CD4-positive, alpha-beta memory T cell (primary cell): ENCODE measurements at regions of chr2 and their contacts with region 1.

Region 1: GRCh38 chr2:85538486-85539360 is at the start of gene MAT2A:
- DNase-seq: peak; percentile 78 to 91 (median 86)
- H3K4me3 ChIP-seq: peak within 1 kb of the TSS; percentile 78 to 98
- H3K4me3 Mint-ChIP-seq: peak within 1 kb of the TSS; percentile 93 to 97 (median 95)
- H3K27ac ChIP-seq: peak within 1 kb of the TSS; percentile 83
- H3K27ac Mint-ChIP-seq: peak within 1 kb of the TSS; percentile 94 to 97 (median 95)
- H3K4me1 ChIP-seq: peaks cover 44% of the 10 kb centered on the region
- H3K4me1 Mint-ChIP-seq: peaks cover 33 to 58% (median 43%) of the 10 kb centered on the region in 4 donors
- H3K27me3 ChIP-seq: no peaks in the 10 kb centered on the region
- H3K27me3 Mint-ChIP-seq: no peaks in the 10 kb centered on the region
- total RNA-seq, gene MAT2A: 177 to 182 TPM

Region 2: DNA sequence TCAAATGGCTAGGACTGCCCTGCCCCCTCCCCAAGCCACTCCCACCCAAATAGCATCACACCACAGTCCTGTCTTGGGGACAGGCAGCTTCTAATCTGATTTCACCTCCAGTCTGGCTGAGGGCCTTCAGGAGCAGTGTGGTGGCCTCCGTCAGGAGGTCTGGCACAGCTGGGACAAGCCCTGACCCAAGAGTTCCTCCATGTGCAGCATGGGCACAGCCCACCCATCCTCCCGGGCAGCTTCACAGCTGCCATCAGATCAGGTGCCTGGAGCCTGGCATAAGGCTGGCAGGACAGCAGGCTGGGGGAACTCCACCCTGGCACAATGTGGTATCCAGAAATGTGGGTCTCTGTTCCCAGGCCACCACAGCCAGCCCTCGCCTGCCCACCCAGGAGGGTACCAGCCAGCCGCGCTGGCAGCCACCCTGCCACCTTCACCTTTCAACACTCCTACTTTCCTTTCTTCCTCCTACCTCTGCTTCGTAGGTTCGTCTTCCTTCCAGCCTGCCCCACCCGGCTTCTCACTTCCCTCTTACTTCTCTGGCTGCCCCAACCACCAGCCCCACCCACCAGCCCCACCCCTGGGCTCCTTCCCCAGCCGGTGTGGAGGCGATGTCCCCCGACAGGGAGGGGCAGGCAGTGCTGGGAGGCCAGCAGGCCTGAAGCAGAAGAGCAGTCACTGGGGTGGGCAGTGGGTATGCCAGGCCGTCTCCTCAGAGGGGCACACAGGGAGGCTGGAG is 128.7 kb before region 1 on chr2 and contains the start of gene CAPG:
- CTCF ChIA-PET with region 1: interaction called, 4 read pairs
- POLR2A ChIA-PET with region 1: interaction called, 16 read pairs
- intact Hi-C with region 1: no loop called
- DNase-seq: peak in 2 of 5 donors; percentile 25 to 34
- H3K4me3 ChIP-seq: peak within 1 kb of the TSS; percentile 47 to 58
- H3K4me3 Mint-ChIP-seq: peak within 1 kb of the TSS; percentile 86 to 90 (median 88)
- H3K27ac ChIP-seq: peak within 1 kb of the TSS; percentile 55
- H3K27ac Mint-ChIP-seq: peak within 1 kb of the TSS; percentile 54 to 92 (median 85)
- H3K4me1 ChIP-seq: peaks cover 62% of the 10 kb centered on the region
- H3K4me1 Mint-ChIP-seq: peaks cover 36 to 52% (median 44%) of the 10 kb centered on the region in 4 donors
- H3K27me3 ChIP-seq: no peaks in the 10 kb centered on the region
- H3K27me3 Mint-ChIP-seq: no peaks in the 10 kb centered on the region
- total RNA-seq, gene CAPG: 25.6 to 38.5 TPM

Region 3: GRCh38 chr2:85437488-85438284 is 101.0 kb before region 1 on chr2:
- CTCF ChIA-PET with region 1: interaction called, 4 read pairs
- POLR2A ChIA-PET with region 1: interaction called, 119 read pairs
- intact Hi-C with region 1: loop called (anchors 1 kb)
- DNase-seq: peak; percentile 77 to 88 (median 81)
- H3K4me3 ChIP-seq: peak overlapping the region; percentile 36 to 52
- H3K4me3 Mint-ChIP-seq: peak overlapping the region; percentile 87 to 95 (median 91)
- H3K27ac ChIP-seq: peak overlapping the region; percentile 75
- H3K27ac Mint-ChIP-seq: peak overlapping the region; percentile 88 to 99 (median 98)
- H3K4me1 ChIP-seq: peaks cover 30% of the 10 kb centered on the region
- H3K4me1 Mint-ChIP-seq: peaks cover 9 to 38% (median 25%) of the 10 kb centered on the region in 4 donors
- H3K27me3 ChIP-seq: no peaks in the 10 kb centered on the region
- H3K27me3 Mint-ChIP-seq: no peaks in the 10 kb centered on the region

Region 4: GRCh38 chr2:85468704-85469349 is 69.9 kb before region 1 on chr2:
- CTCF ChIA-PET with region 1: no interaction called
- POLR2A ChIA-PET with region 1: no interaction called
- intact Hi-C with region 1: no loop called
- DNase-seq: no peak
- H3K4me3 ChIP-seq: no peak overlapping the region
- H3K4me3 Mint-ChIP-seq: no peak overlapping the region
- H3K27ac ChIP-seq: no peak overlapping the region
- H3K27ac Mint-ChIP-seq: no peak overlapping the region
- H3K4me1 ChIP-seq: no peaks in the 10 kb centered on the region
- H3K4me1 Mint-ChIP-seq: no peaks in the 10 kb centered on the region
- H3K27me3 ChIP-seq: no peaks in the 10 kb centered on the region
- H3K27me3 Mint-ChIP-seq: no peaks in the 10 kb centered on the region

Region 5: GRCh38 chr2:85561317-85561979 is 22.7 kb after region 1 on chr2 and contains the start of gene GGCX:
- CTCF ChIA-PET with region 1: interaction called, 144 read pairs
- POLR2A ChIA-PET with region 1: interaction called, 16 read pairs
- intact Hi-C with region 1: loop called (anchors 1 kb)
- DNase-seq: peak; percentile 86 to 95 (median 87)
- H3K4me3 ChIP-seq: peak within 1 kb of the TSS; percentile 74 to 97
- H3K4me3 Mint-ChIP-seq: peak within 1 kb of the TSS; percentile 94 to 99 (median 98)
- H3K27ac ChIP-seq: peak within 1 kb of the TSS; percentile 89
- H3K27ac Mint-ChIP-seq: peak within 1 kb of the TSS; percentile 94 to 99 (median 97)
- H3K4me1 ChIP-seq: peaks cover 19% of the 10 kb centered on the region
- H3K4me1 Mint-ChIP-seq: peaks cover 12 to 35% (median 22%) of the 10 kb centered on the region in 4 donors
- H3K27me3 ChIP-seq: no peaks in the 10 kb centered on the region
- H3K27me3 Mint-ChIP-seq: no peaks in the 10 kb centered on the region
- total RNA-seq, gene GGCX: 28.5 to 38.1 TPM

Region 6: DNA sequence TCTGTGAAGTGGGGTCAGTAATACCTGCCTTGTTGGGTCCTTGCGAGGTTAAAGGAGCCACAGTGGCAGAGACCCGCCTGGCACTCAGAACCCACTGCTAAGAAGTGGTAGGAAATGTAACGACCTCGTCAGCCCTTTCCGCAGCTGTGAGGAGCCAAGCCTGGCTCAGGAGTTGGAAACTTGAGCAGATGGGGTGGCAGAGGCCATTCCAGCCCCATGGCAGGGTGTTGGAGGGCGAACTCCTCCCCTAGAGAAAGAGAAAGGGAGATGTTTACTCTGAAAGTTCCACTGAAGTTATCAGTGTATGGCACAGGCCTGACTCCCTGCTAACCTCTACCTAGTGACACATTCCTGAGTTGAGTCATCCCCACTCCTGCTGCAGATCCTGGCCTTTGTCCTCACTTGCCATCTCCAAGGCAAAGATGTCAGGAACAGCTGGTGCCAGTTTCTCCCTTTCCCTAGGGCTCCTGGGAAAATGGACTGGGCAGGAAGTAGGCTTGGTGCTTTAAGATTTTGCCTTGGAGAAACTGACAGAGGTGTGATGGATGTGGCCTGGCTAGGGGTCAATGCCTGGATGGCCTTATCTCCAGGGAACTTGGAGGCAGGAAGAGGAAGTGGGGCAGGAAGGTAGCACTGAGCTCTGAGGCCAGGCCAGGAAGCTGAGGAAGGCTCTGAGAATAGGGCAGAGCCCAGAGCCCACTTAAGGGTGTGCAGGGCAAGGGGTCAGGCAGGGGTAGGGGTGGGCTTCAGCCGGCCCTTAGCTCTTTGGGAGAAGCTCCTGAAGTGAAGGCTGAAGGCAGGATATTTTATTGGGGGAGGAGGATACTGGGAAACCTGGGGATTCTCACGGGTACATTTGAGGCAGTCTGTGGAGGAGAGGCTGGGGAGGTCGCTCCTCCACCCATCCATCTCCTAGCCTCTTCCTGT is 46.4 kb after region 1 on chr2:
- CTCF ChIA-PET with region 1: no interaction called
- POLR2A ChIA-PET with region 1: interaction called, 28 read pairs
- intact Hi-C with region 1: no loop called
- DNase-seq: peak in 3 of 5 donors; percentile 24 to 32 (median 24)
- H3K4me3 ChIP-seq: peak overlapping the region; percentile 57 to 64
- H3K4me3 Mint-ChIP-seq: peak overlapping the region; percentile 88 to 98 (median 90)
- H3K27ac ChIP-seq: peak overlapping the region; percentile 80
- H3K27ac Mint-ChIP-seq: peak overlapping the region; percentile 85 to 94 (median 92)
- H3K4me1 ChIP-seq: peaks cover 41% of the 10 kb centered on the region
- H3K4me1 Mint-ChIP-seq: peaks cover 38 to 68% (median 52%) of the 10 kb centered on the region in 4 donors
- H3K27me3 ChIP-seq: no peaks in the 10 kb centered on the region
- H3K27me3 Mint-ChIP-seq: no peaks in the 10 kb centered on the region

Region 7: GRCh38 chr2:85602476-85603234 is 63.9 kb after region 1 on chr2 and contains the start of gene TMEM150A:
- CTCF ChIA-PET with region 1: no interaction called
- POLR2A ChIA-PET with region 1: interaction called, 18 read pairs
- intact Hi-C with region 1: no loop called
- DNase-seq: peak; percentile 81 to 85 (median 82)
- H3K4me3 ChIP-seq: peak within 1 kb of the TSS; percentile 66 to 95
- H3K4me3 Mint-ChIP-seq: peak within 1 kb of the TSS; percentile 88 to 94 (median 90)
- H3K27ac ChIP-seq: peak within 1 kb of the TSS; percentile 62
- H3K27ac Mint-ChIP-seq: peak within 1 kb of the TSS; percentile 82 to 96 (median 90)
- H3K4me1 ChIP-seq: peaks cover 28% of the 10 kb centered on the region
- H3K4me1 Mint-ChIP-seq: peaks cover 14 to 49% (median 34%) of the 10 kb centered on the region in 4 donors
- H3K27me3 ChIP-seq: no peaks in the 10 kb centered on the region
- H3K27me3 Mint-ChIP-seq: no peaks in the 10 kb centered on the region
- total RNA-seq, gene TMEM150A: 13.3 to 14.3 TPM

Region 8: GRCh38 chr2:85707304-85707703 is 168.6 kb after region 1 on chr2:
- CTCF ChIA-PET with region 1: no interaction called
- POLR2A ChIA-PET with region 1: no interaction called
- intact Hi-C with region 1: no loop called
- DNase-seq: peak; percentile 66 to 75 (median 72)
- H3K4me3 ChIP-seq: no peak overlapping the region
- H3K4me3 Mint-ChIP-seq: peak overlapping the region in 1 of 8 donors; percentile 1
- H3K27ac ChIP-seq: no peak overlapping the region
- H3K27ac Mint-ChIP-seq: peak overlapping the region in 3 of 7 donors; percentile 11 to 45 (median 17)
- H3K4me1 ChIP-seq: peaks cover 18% of the 10 kb centered on the region
- H3K4me1 Mint-ChIP-seq: peaks cover 10 to 39% (median 19%) of the 10 kb centered on the region in 4 donors
- H3K27me3 ChIP-seq: no peaks in the 10 kb centered on the region
- H3K27me3 Mint-ChIP-seq: peaks cover 3% of the 10 kb centered on the region in 2 donors

Region 9: DNA sequence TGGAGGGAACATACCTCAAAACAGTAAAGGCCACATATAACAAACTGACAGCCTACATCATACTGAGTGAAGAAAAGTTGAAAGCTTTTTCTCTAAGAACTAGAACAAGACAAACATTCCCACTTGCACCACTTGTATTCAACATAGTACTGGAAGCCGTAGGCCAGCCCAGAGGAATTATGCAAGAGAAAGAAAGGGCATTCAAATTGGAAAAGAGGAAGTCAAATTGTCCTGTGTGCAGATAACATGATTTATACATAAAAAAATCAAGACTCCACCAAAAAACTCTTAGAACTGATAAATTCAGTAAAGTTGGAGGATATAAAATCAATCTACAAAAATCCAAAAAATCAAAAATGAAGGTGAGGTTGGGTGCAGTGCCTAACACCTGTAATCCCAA is 894.4 kb after region 1 on chr2:
- CTCF ChIA-PET with region 1: no interaction called
- POLR2A ChIA-PET with region 1: no interaction called
- intact Hi-C with region 1: no loop called
- DNase-seq: no peak
- H3K4me3 ChIP-seq: no peak overlapping the region
- H3K4me3 Mint-ChIP-seq: no peak overlapping the region
- H3K27ac ChIP-seq: no peak overlapping the region
- H3K27ac Mint-ChIP-seq: no peak overlapping the region
- H3K4me1 ChIP-seq: no peaks in the 10 kb centered on the region
- H3K4me1 Mint-ChIP-seq: no peaks in the 10 kb centered on the region
- H3K27me3 ChIP-seq: no peaks in the 10 kb centered on the region
- H3K27me3 Mint-ChIP-seq: peaks cover 2 to 5% of the 10 kb centered on the region in 2 donors